ENCODE measurements at regions of chr9 and their contacts with region 1.

Region 1: GRCh38 chr9:19174127-19174912 is 47.0 kb upstream of the PLIN2 start:
- DNase-seq: peak; percentile 77
- H3K4me3 Mint-ChIP-seq: no peak overlapping the region
- H3K27ac Mint-ChIP-seq: no peak overlapping the region
- H3K4me1 Mint-ChIP-seq: peaks cover 22% of the 10 kb centered on the region
- H3K27me3 Mint-ChIP-seq: no peaks in the 10 kb centered on the region

Region 2: DNA sequence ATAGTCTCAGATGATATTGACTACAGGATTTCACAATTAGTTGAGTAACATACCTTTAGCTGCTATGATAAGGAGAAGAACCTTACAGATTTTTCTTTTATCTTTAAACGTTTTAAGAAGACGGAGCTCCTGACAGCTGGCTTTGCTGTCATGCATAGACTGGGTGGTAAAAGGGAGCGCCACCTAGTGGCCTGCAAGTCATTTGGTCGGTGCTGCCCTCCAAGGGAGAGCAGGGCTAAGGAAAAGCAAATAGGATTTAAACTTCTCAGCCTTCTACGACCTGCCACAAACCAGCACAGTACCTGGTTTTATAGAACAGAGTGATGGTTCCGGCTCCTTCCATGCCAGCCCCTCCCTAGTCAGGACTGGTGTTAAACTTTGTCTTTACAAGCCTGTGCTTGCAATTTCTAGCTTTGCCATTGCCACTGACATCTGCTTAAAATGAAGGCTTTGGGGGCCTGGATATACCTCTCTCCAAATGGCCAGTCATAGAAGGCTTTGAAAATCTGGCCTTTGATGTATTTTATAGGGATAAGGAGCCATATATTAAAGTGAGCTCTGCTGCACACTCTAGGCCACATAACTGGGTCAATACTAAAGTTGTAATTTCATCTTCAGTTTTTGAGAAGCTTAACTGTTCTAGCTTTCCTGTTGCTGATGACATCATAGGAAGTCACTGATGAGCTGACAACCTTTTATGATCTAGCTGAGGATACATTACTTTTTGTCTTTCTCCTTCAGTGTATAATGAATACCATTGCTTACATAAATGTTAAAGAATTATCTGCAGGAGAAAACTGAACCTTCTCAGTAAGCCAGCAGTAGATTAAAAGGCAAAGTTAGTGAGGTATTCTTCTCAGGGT is 731.5 kb before region 1 on chr9:
- CTCF ChIA-PET with region 1: interaction called, 3 read pairs
- intact Hi-C with region 1: loop called (anchors 5 kb)
- DNase-seq: peak; percentile 73
- H3K4me3 Mint-ChIP-seq: no peak overlapping the region
- H3K27ac Mint-ChIP-seq: no peak overlapping the region
- H3K4me1 Mint-ChIP-seq: peaks cover 4% of the 10 kb centered on the region
- H3K27me3 Mint-ChIP-seq: peaks cover 18% of the 10 kb centered on the region

Region 3: GRCh38 chr9:19085295-19085694 is 89.0 kb before region 1 on chr9:
- CTCF ChIA-PET with region 1: interaction called, 52 read pairs
- intact Hi-C with region 1: loop called (anchors 1 kb)
- DNase-seq: no peak
- H3K4me3 Mint-ChIP-seq: no peak overlapping the region
- H3K27ac Mint-ChIP-seq: no peak overlapping the region
- H3K4me1 Mint-ChIP-seq: no peaks in the 10 kb centered on the region
- H3K27me3 Mint-ChIP-seq: no peaks in the 10 kb centered on the region

Region 4: GRCh38 chr9:19127881-19128500 is 46.3 kb before region 1 on chr9:
- CTCF ChIA-PET with region 1: interaction called, 10 read pairs
- intact Hi-C with region 1: loop called (anchors 1 kb)
- DNase-seq: peak; percentile 45
- H3K4me3 Mint-ChIP-seq: peak overlapping the region; percentile 92
- H3K27ac Mint-ChIP-seq: peak overlapping the region; percentile 91
- H3K4me1 Mint-ChIP-seq: peaks cover 53% of the 10 kb centered on the region
- H3K27me3 Mint-ChIP-seq: no peaks in the 10 kb centered on the region

Region 5: GRCh38 chr9:19161257-19162025 is 12.9 kb before region 1 on chr9:
- CTCF ChIA-PET with region 1: interaction called, 18 read pairs
- intact Hi-C with region 1: loop called (anchors 1 kb)
- DNase-seq: peak; percentile 87
- H3K4me3 Mint-ChIP-seq: no peak overlapping the region
- H3K27ac Mint-ChIP-seq: peak overlapping the region; percentile 81
- H3K4me1 Mint-ChIP-seq: peaks cover 23% of the 10 kb centered on the region
- H3K27me3 Mint-ChIP-seq: no peaks in the 10 kb centered on the region

Measured in activated naive CD4-positive, alpha-beta T cell treated with anti-CD3 and anti-CD28 coated beads for 36 hours (primary cell).